CD4-positive, alpha-beta T cell (primary cell): ENCODE measurements at regions of chr19 and their contacts with region 1.

Region 1: GRCh38 chr19:8444645-8445487 is at the start of gene HNRNPM:
- DNase-seq: peak; percentile 99 to 100 (median 100)
- ATAC-seq: peak; percentile 94
- H3K4me3 ChIP-seq: peak within 1 kb of the TSS; percentile 97
- H3K4me3 Mint-ChIP-seq: peak within 1 kb of the TSS; percentile 100
- H3K27ac ChIP-seq: peak within 1 kb of the TSS; percentile 86 to 93
- H3K27ac Mint-ChIP-seq: peak within 1 kb of the TSS; percentile 98
- H3K4me1 ChIP-seq: peaks cover 52% of the 10 kb centered on the region
- H3K4me1 Mint-ChIP-seq: peaks cover 47% of the 10 kb centered on the region
- H3K27me3 ChIP-seq: no peaks in the 10 kb centered on the region
- H3K27me3 Mint-ChIP-seq: no peaks in the 10 kb centered on the region
- CTCF ChIP-seq: no peak
- total RNA-seq, gene HNRNPM: 269 to 272 TPM

Region 2: GRCh38 chr19:8412783-8413628 is 31.9 kb before region 1 on chr19 and contains the start of gene MARCHF2:
- CTCF ChIA-PET with region 1: interaction called, 8 read pairs
- POLR2A ChIA-PET with region 1: interaction called, 47 read pairs
- intact Hi-C with region 1: loop called (anchors 1 kb)
- DNase-seq: peak; percentile 91 to 99 (median 96)
- ATAC-seq: peak; percentile 99
- H3K4me3 ChIP-seq: peak within 1 kb of the TSS; percentile 62
- H3K4me3 Mint-ChIP-seq: peak within 1 kb of the TSS; percentile 81
- H3K27ac ChIP-seq: no peak within 1 kb of the TSS
- H3K27ac Mint-ChIP-seq: no peak within 1 kb of the TSS
- H3K4me1 ChIP-seq: peaks cover 15% of the 10 kb centered on the region
- H3K4me1 Mint-ChIP-seq: peaks cover 13% of the 10 kb centered on the region
- H3K27me3 ChIP-seq: no peaks in the 10 kb centered on the region
- H3K27me3 Mint-ChIP-seq: no peaks in the 10 kb centered on the region
- CTCF ChIP-seq: peak; percentile 75
- total RNA-seq, gene MARCHF2: 20.0 to 22.2 TPM

Region 3: DNA sequence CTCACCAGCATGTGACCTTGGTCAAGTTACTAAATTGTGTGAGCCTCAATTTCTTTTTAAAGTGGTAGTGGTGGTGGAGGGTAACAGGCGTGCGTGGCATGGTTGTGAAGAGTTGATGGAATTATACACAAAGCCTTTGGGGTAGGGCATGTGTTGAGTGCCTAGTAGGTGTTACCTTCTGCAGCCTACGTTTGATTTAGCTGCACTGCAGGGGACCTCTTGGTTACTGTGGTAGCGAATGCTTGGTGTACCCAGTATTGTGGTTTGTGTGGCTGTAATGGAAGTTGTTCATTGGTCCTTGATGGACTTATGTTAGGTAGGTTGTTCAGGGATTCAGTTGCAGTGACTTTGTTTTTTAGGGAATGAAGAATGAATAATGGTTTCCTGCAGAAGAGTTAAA is 33.0 kb after region 1 on chr19:
- CTCF ChIA-PET with region 1: interaction called, 3 read pairs
- POLR2A ChIA-PET with region 1: interaction called, 15 read pairs
- intact Hi-C with region 1: no loop called
- DNase-seq: no peak
- ATAC-seq: no peak
- H3K4me3 ChIP-seq: no peak overlapping the region
- H3K4me3 Mint-ChIP-seq: peak overlapping the region; percentile 71
- H3K27ac ChIP-seq: no peak overlapping the region
- H3K27ac Mint-ChIP-seq: peak overlapping the region; percentile 84
- H3K4me1 ChIP-seq: peaks cover 36% of the 10 kb centered on the region
- H3K4me1 Mint-ChIP-seq: peaks cover 81% of the 10 kb centered on the region
- H3K27me3 ChIP-seq: no peaks in the 10 kb centered on the region
- H3K27me3 Mint-ChIP-seq: no peaks in the 10 kb centered on the region
- CTCF ChIP-seq: no peak

Region 4: DNA sequence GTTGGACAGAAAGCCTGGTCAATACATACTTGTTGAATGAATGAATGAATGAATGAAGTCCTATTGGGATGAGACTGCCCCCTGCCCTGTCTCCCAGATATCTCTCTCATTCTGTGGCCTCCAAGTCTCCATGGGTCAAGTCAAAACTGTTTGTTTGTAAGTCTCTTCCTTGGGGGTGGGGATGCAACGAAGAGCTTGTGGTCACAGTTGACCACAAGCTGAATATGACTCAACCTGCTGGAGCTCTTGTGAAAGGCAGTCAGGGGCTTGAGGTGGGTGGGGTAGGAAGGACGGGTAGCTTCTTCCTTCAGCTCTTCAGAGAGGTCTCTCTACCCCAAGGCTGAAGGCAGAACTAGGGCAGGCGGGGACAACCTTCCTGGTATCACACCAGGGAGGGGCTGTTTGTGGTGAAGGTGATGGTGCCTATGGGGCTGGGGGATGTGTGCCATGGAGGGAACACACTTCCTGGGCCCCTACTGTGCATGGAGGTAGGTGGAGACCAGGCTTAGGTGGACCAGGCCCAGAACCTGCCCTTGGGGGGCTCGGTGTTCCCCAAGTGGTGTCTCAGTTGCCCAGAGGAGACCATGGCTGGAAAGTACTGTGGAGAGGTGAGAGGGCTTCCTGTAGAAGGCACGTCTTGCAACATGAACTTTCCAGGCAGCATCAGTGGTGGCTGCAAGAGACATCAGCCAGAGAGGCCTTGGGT is 124.4 kb after region 1 on chr19:
- CTCF ChIA-PET with region 1: no interaction called
- POLR2A ChIA-PET with region 1: interaction called, 11 read pairs
- intact Hi-C with region 1: no loop called
- DNase-seq: peak in 13 of 14 experiments; percentile 51 to 91 (median 64)
- ATAC-seq: peak; percentile 75
- H3K4me3 ChIP-seq: peak overlapping the region; percentile 32
- H3K4me3 Mint-ChIP-seq: peak overlapping the region; percentile 76
- H3K27ac ChIP-seq: peak overlapping the region; percentile 59 to 79
- H3K27ac Mint-ChIP-seq: peak overlapping the region; percentile 95
- H3K4me1 ChIP-seq: peaks cover 100% of the 10 kb centered on the region
- H3K4me1 Mint-ChIP-seq: peaks cover 63% of the 10 kb centered on the region
- H3K27me3 ChIP-seq: no peaks in the 10 kb centered on the region
- H3K27me3 Mint-ChIP-seq: no peaks in the 10 kb centered on the region
- CTCF ChIP-seq: no peak